ENCODE measurements at regions of chr10 and their contacts with region 1.

Region 1: GRCh38 chr10:5873515-5873995 is 16.1 kb downstream of the ANKRD16 start:
- DNase-seq: peak; percentile 71
- H3K4me3 Mint-ChIP-seq: no peak overlapping the region
- H3K27ac Mint-ChIP-seq: no peak overlapping the region
- H3K4me1 Mint-ChIP-seq: no peaks in the 10 kb centered on the region
- H3K27me3 Mint-ChIP-seq: no peaks in the 10 kb centered on the region
- CTCF ChIP-seq: no peak

Region 2: DNA sequence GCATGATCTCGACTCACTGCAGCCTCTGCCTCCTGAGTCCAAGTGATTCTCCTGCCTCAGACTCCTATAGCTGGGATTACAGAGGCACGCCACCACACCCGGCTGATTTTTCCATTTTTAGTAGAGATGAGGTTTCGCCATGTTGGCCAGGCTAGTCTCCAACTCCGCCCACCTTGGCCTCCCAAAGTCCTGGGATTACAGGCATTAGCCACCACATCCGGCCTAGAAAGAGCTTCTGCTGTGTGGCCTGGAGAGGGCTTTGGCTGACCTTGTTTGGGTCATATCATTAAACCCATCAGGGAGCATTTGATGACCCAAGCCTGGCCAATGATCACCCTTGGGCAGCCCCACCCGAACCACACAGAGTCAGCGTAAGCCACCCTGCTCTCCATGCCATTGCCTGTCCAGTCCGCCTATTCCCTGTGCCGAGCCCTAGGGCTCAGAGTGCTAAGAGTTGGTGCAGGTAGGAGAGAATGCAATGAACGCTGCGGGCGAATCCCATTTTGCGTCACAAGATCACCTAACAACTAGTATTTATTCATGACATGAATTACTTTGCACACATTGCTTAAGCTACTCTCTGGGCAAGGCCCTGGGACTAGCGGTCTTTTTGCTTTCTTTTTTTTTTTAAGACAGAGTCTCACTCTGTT is 38.0 kb before region 1 on chr10:
- CTCF ChIA-PET with region 1: no interaction called
- intact Hi-C with region 1: loop called (anchors 5 kb)
- DNase-seq: no peak
- H3K4me3 Mint-ChIP-seq: no peak overlapping the region
- H3K27ac Mint-ChIP-seq: no peak overlapping the region
- H3K4me1 Mint-ChIP-seq: peaks cover 8% of the 10 kb centered on the region
- H3K27me3 Mint-ChIP-seq: no peaks in the 10 kb centered on the region
- CTCF ChIP-seq: no peak

Measured in Calu3 (cell line).